ENCODE measurements at regions of chr4 and their contacts with region 1.

Region 1: GRCh38 chr4:53929955-53930798 is 134.2 kb downstream of the CHIC2 start:
- DNase-seq: peak; percentile 61
- H3K4me3 ChIP-seq: peak overlapping the region in 1 of 2 experiments; percentile 7; a peak in 1 of 4 replicates
- H3K27ac ChIP-seq: peak overlapping the region in 1 of 2 experiments; percentile 84; a peak in 2 of 4 replicates
- H3K4me1 ChIP-seq: peaks cover 3 to 30% of the 10 kb centered on the region in 2 experiments
- H3K27me3 ChIP-seq: no peaks in the 10 kb centered on the region
- CTCF ChIP-seq: peak; percentile 85
- EP300 ChIP-seq: no peak; a peak in 1 of 4 replicates
- RAD21 ChIP-seq: peak; percentile 92

Region 2: DNA sequence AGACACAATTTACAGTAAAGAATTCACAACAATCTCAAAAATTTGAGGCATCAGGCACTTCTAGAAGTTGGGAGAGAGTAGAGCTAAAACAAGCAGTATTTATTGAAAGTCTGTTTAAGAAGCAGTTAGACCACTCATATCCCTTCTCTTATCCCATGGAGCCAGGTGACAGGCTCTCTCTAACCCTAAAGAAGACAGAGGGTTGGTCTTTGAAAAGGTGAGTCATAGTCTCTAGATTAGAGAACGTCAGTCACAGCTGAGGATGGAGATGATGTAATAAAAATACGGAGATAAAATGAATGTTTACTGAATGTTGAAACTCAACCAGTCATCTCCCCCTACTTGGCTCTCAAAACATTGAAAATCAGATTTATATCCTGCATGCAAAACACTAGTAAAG is 89.5 kb before region 1 on chr4:
- CTCF ChIA-PET with region 1: no interaction called
- POLR2A ChIA-PET with region 1: no interaction called
- DNase-seq: no peak
- H3K4me3 ChIP-seq: no peak overlapping the region
- H3K27ac ChIP-seq: no peak overlapping the region
- H3K4me1 ChIP-seq: no peaks in the 10 kb centered on the region
- H3K27me3 ChIP-seq: no peaks in the 10 kb centered on the region
- CTCF ChIP-seq: no peak
- EP300 ChIP-seq: no peak
- RAD21 ChIP-seq: no peak

Region 3: DNA sequence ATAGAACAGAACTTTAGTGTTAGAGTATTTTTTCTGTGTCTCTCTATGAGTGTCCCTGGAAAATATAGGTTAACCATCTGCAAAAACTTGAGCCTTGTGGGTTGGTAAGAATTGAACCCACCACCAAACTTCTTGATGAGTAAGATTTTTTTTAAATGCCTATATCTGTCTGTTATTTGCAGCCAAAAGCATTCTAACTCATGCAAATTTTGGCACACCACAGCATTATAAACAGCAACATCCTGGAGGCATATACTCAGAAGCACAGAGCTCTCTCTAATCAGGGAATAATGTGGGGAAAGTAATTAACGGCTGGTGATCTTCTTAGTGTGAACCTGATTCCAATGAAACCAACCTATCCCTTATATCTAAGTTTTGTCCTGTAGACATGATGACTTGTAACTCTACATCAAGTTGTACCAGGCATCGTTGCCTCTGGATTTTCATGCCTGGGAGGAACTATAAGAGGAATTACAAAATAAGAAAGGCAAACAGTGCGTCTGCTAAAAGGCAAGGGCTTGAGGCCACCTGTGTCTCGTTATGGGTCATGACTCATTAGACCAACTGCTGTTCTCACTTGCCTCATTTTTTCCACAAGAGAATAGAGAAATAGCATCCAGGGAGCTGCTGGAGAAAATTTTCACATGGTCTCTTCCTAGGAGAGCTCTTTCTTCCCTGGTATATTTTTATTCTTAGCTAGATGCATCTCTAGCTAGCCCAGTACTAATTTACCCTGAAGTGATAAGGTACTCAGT is 68.1 kb before region 1 on chr4:
- CTCF ChIA-PET with region 1: no interaction called
- POLR2A ChIA-PET with region 1: no interaction called
- DNase-seq: no peak
- H3K4me3 ChIP-seq: no peak overlapping the region
- H3K27ac ChIP-seq: peak overlapping the region; percentile 55 to 78
- H3K4me1 ChIP-seq: peaks cover 0 to 21% of the 10 kb centered on the region in 2 experiments; a peak in 2 of 4 replicates
- H3K27me3 ChIP-seq: no peaks in the 10 kb centered on the region
- CTCF ChIP-seq: no peak
- EP300 ChIP-seq: peak in 1 of 2 experiments; percentile 76; a peak in 2 of 4 replicates
- RAD21 ChIP-seq: no peak

Region 4: GRCh38 chr4:53914313-53915016 is 15.7 kb before region 1 on chr4:
- CTCF ChIA-PET with region 1: interaction called, 50 read pairs
- POLR2A ChIA-PET with region 1: no interaction called
- DNase-seq: no peak
- H3K4me3 ChIP-seq: no peak overlapping the region
- H3K27ac ChIP-seq: peak overlapping the region in 1 of 2 experiments; percentile 77; a peak in 2 of 4 replicates
- H3K4me1 ChIP-seq: peaks cover 3 to 7% of the 10 kb centered on the region in 2 experiments
- H3K27me3 ChIP-seq: no peaks in the 10 kb centered on the region
- CTCF ChIP-seq: no peak
- EP300 ChIP-seq: peak in 1 of 2 experiments; percentile 64; a peak in 1 of 4 replicates
- RAD21 ChIP-seq: no peak

Region 5: DNA sequence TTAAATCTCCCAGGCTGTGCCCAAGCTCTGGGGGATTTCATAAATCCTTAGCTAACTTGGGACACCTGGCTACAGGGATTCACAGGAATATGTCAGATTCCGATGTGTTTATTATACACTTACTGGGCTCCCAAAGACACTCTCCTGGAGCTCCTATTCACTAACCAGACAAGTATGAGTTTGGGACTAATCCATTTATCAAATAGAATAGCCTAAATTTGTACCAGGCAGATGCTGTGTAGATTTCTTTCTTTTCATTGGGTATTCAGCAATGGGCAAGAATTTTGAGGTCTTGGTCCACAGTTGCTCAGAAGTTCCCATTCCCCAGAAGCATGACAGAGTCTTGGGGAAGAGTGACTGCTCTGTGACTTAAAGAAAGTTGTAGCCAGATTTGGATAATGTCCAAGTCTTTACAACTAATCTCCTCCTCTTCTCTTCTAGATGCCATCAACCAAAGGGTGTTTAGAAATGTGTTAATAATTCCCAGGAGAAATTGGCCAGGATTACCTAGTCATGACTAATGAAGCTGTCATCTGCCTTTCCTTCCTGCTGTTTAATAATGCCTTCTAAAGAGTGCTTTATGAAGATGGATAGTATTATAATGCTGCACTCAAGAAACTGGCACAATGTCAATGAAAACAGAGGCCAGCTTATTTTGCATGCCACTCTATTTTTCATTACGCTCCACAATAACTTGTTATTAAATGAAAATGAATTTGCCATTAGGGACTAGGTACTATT is 13.3 kb after region 1 on chr4:
- CTCF ChIA-PET with region 1: interaction called, 27 read pairs
- POLR2A ChIA-PET with region 1: no interaction called
- DNase-seq: no peak
- H3K4me3 ChIP-seq: no peak overlapping the region
- H3K27ac ChIP-seq: peak overlapping the region; percentile 53 to 81; a peak in 3 of 4 replicates
- H3K4me1 ChIP-seq: peaks cover 0 to 17% of the 10 kb centered on the region in 2 experiments; a peak in 1 of 4 replicates
- H3K27me3 ChIP-seq: no peaks in the 10 kb centered on the region
- CTCF ChIP-seq: no peak
- EP300 ChIP-seq: peak; percentile 63 to 94
- RAD21 ChIP-seq: no peak

Region 6: DNA sequence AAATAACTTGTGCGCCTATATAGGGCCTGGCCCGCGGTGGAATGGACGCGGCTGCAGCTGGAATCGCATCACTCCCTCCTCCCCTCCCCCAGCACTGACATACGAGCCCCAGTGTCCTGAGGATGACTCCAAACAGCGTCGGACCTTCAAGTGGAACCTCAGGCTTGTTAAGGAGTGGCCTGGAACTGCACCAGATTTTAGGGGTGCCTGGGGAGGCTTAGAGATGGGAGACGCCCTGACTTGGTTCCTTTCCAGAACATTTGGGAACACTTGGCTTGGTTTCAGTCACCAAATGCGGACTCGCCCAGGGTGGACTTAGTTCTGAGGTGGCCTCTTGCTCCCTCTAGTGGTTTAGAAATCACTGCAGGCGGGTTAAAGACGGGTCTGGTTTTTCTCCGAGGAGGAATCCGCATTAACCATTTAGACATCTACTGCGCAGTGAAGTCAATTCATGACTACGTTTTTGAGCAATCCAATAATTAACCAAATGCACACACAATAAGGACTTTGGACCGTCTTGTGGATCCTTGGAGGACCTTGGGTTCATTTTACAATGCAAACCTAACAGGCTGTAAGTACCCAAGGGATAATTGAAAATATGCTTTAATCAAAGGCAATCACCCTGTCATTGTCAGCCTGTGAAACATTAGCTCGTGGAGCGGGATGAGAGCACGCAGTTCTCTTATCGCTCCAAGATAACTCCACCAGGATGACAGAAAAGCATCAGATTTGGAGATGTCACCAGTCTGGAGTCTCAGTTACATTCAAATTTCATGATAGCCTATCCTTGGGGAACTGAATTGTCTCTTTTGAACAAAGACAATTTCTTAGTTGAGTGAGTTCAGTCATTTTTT is 287.7 kb after region 1 on chr4:
- CTCF ChIA-PET with region 1: interaction called, 122 read pairs
- POLR2A ChIA-PET with region 1: no interaction called
- DNase-seq: peak; percentile 81
- H3K4me3 ChIP-seq: peak overlapping the region; percentile 45 to 54
- H3K27ac ChIP-seq: peak overlapping the region in 1 of 2 experiments; percentile 71; a peak in 1 of 4 replicates
- H3K4me1 ChIP-seq: peaks cover 0 to 7% of the 10 kb centered on the region in 2 experiments; a peak in 3 of 4 replicates
- H3K27me3 ChIP-seq: no peaks in the 10 kb centered on the region
- CTCF ChIP-seq: peak; percentile 96
- EP300 ChIP-seq: peak; percentile 24 to 56; a peak in 2 of 4 replicates
- RAD21 ChIP-seq: peak; percentile 94

Measured in SK-N-SH (cell line).